ENCODE measurements at regions of chr17 and their contacts with region 1.

Region 1: GRCh38 chr17:45277216-45277849 is 15.4 kb upstream of the SPATA32 start:
- DNase-seq: peak; percentile 95
- H3K4me3 Mint-ChIP-seq: no peak overlapping the region
- H3K27ac Mint-ChIP-seq: no peak overlapping the region
- H3K4me1 Mint-ChIP-seq: peaks cover 13% of the 10 kb centered on the region
- H3K27me3 Mint-ChIP-seq: no peaks in the 10 kb centered on the region
- CTCF ChIP-seq: peak; percentile 84

Region 2: DNA sequence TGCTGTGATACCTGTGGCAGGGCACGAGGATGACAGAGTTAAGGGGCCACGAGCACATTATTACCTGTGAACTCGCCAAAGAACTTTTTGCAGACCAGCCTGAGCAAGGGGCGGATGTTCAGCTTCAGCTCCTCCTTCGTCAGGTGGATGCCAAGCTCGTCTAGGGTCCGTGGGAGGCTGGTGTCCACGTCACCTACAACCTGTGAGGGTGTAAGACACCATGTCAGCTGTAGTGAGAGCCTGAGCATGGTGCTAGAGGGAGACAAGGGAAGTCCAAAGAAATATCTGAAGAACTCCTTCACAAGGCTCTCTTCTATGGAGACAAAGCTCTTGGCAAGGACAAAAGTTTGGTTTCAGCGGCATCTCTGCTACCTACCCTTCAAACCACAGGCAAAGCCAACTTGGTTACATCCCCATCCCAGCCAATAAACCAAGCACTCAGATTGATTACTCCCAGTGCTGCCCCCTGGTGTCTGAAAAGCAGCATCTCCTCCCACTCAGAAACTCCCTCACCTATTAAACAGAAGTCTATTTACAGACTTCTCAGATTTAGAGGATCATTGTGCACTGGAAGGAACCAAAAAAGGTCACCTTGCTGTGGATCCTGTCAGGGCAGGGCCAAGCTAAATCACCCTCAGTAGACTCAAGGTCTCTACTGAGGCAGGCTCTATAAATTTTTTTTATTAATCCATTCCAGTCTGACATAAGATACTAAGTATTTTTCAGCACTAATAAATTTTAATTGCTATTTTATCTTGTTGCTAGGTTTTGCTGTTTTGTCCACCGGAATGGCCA is 412.3 kb before region 1 on chr17:
- CTCF ChIA-PET with region 1: no interaction called
- intact Hi-C with region 1: no loop called
- DNase-seq: peak; percentile 87
- H3K4me3 Mint-ChIP-seq: no peak overlapping the region
- H3K27ac Mint-ChIP-seq: no peak overlapping the region
- H3K4me1 Mint-ChIP-seq: no peaks in the 10 kb centered on the region
- H3K27me3 Mint-ChIP-seq: no peaks in the 10 kb centered on the region
- CTCF ChIP-seq: peak; percentile 91

Region 3: GRCh38 chr17:45155029-45155428 is 122.3 kb before region 1 on chr17:
- CTCF ChIA-PET with region 1: interaction called, 10 read pairs
- intact Hi-C with region 1: no loop called
- DNase-seq: no peak
- H3K4me3 Mint-ChIP-seq: no peak overlapping the region
- H3K27ac Mint-ChIP-seq: no peak overlapping the region
- H3K4me1 Mint-ChIP-seq: peaks cover 47% of the 10 kb centered on the region
- H3K27me3 Mint-ChIP-seq: no peaks in the 10 kb centered on the region
- CTCF ChIP-seq: no peak

Region 4: GRCh38 chr17:45197555-45198334 is 79.6 kb before region 1 on chr17:
- CTCF ChIA-PET with region 1: no interaction called
- intact Hi-C with region 1: no loop called
- DNase-seq: peak; percentile 100
- H3K4me3 Mint-ChIP-seq: no peak overlapping the region
- H3K27ac Mint-ChIP-seq: peak overlapping the region; percentile 86
- H3K4me1 Mint-ChIP-seq: peaks cover 30% of the 10 kb centered on the region
- H3K27me3 Mint-ChIP-seq: no peaks in the 10 kb centered on the region
- CTCF ChIP-seq: peak; percentile 100

Region 5: GRCh38 chr17:45218895-45219661 is 58.3 kb before region 1 on chr17:
- CTCF ChIA-PET with region 1: interaction called, 15 read pairs
- intact Hi-C with region 1: no loop called
- DNase-seq: peak; percentile 95
- H3K4me3 Mint-ChIP-seq: no peak overlapping the region
- H3K27ac Mint-ChIP-seq: no peak overlapping the region
- H3K4me1 Mint-ChIP-seq: no peaks in the 10 kb centered on the region
- H3K27me3 Mint-ChIP-seq: peaks cover 43% of the 10 kb centered on the region
- CTCF ChIP-seq: peak; percentile 98

Region 6: DNA sequence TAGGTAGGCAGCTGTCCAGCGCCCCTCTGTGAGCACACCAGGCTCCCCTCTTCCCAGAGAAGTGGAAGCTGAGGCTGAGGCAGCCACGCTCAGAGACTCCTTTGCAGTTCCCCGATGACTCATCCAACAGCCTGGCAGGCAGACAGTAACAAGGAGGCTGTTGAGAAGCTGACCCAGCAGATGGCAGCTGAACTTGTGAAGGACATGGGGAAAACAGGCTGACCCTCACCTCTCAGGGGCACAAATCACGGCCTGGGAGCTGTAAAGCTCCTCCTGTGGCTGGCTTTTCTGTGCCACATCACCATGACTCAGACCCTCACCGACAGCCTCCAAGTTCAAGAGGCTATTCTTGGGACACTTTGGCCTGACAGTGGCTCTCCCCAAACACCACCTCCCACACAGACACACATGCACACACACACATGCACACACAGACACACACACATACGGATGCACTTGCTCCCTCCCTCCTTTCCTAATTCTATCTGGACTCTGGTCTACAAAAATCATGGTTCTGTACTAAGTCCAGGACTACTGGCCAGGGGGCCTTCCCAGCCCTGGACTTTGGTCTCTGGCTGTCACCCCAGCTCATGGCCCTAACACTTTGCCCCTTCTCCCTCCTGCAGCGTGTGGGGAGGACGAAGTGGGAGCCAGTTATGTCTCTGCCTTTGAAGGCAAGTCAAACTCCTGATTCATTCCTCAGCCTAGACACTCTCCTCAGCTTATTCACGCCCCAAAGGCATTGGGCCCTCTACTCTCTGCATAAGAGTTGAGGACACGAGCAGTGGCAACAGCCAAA is 16.3 kb after region 1 on chr17:
- CTCF ChIA-PET with region 1: interaction called, 14 read pairs
- intact Hi-C with region 1: no loop called
- DNase-seq: peak; percentile 81
- H3K4me3 Mint-ChIP-seq: peak overlapping the region; percentile 21
- H3K27ac Mint-ChIP-seq: peak overlapping the region; percentile 66
- H3K4me1 Mint-ChIP-seq: peaks cover 73% of the 10 kb centered on the region
- H3K27me3 Mint-ChIP-seq: no peaks in the 10 kb centered on the region
- CTCF ChIP-seq: no peak

Region 7: DNA sequence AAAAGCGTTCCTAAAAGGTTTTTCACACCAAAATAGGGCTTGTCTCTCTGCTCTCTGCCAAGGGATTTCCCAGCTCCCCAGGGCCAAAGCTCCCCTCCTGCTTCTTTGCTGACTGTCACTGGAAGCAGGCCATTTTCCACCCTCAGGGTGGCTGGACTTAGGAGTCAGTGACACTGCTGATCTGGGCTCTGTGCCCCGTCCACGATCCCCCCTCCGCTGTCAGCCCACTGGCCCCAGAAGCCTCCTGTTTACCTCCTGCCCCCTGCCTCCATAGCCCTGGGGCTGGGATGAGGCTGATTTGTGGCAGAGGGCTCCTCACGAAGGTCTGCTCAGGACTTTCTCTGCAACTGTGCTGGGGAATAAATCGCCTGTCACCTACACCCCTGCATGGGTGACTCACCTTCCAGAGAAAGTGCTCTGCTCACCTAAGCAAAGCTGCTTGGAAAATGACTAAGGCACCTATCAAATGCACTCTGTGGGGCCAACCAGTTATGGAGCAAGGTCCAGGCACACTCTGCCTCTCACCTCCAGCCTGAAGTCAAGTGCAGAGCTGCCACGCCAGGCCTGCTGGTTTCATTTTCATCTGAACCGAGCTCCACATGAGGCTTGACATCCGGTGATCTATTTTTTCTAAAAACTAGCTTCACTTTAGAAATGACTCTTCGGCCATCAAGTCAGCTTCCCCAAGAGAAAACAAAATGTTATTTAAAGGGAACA is 34.6 kb after region 1 on chr17:
- CTCF ChIA-PET with region 1: interaction called, 24 read pairs
- intact Hi-C with region 1: loop called (anchors 2 kb)
- DNase-seq: peak; percentile 90
- H3K4me3 Mint-ChIP-seq: peak overlapping the region; percentile 88
- H3K27ac Mint-ChIP-seq: peak overlapping the region; percentile 85
- H3K4me1 Mint-ChIP-seq: peaks cover 88% of the 10 kb centered on the region
- H3K27me3 Mint-ChIP-seq: no peaks in the 10 kb centered on the region
- CTCF ChIP-seq: no peak

Measured in Calu3 (cell line).